Right cardiac atrium (tissue), 5 donors: ENCODE measurements at regions of chr2 and their contacts with region 1.

Region 1: GRCh38 chr2:186589612-186590349 is at the start of gene ITGAV:
- DNase-seq: peak; percentile 95 to 97 (median 96)
- ATAC-seq: peak; percentile 99
- H3K4me3 ChIP-seq: peak within 1 kb of the TSS; percentile 73
- H3K27ac ChIP-seq: peak within 1 kb of the TSS; percentile 99
- H3K4me1 ChIP-seq: peaks cover 4% of the 10 kb centered on the region
- H3K27me3 ChIP-seq: no peaks in the 10 kb centered on the region
- total RNA-seq, gene ITGAV: 98.6 to 135 (median 123) TPM

Region 2: GRCh38 chr2:186496401-186496800 is 93.4 kb before region 1 on chr2:
- intact Hi-C with region 1: loop called in 1 of 4 experiments (anchors 10 kb)
- DNase-seq: no peak
- ATAC-seq: no peak
- H3K4me3 ChIP-seq: no peak overlapping the region
- H3K27ac ChIP-seq: no peak overlapping the region
- H3K4me1 ChIP-seq: peaks cover 4% of the 10 kb centered on the region
- H3K27me3 ChIP-seq: no peaks in the 10 kb centered on the region